Activated CD4-positive, alpha-beta T cell treated with anti-CD3 and anti-CD28 coated beads for 36 hours (primary cell): ENCODE measurements at regions of chr9 and their contacts with region 1.

Region 1: DNA sequence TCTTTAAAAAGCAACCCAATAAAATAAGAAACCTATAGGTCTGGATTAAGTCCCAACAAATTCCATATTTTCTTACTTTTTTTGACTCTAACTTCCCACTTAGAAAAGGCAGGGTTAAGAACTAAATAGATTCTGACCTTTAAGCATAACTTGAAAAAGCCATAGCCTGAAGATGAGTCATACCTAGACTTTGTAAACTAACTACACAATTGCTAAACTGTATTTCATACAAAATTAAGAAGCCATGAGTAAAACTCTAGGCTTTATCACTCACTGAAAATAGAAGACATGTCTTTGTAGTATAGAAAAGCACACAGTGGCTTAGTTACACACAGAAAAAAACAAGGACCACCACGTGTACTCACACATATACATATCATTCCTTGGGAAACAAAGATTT is 51.5 kb downstream of the MLLT3 start:
- DNase-seq: no peak
- ATAC-seq: peak; percentile 89
- H3K4me3 Mint-ChIP-seq: no peak overlapping the region
- H3K27ac Mint-ChIP-seq: no peak overlapping the region
- H3K4me1 Mint-ChIP-seq: peaks cover 72% of the 10 kb centered on the region
- H3K27me3 Mint-ChIP-seq: no peaks in the 10 kb centered on the region

Region 2: DNA sequence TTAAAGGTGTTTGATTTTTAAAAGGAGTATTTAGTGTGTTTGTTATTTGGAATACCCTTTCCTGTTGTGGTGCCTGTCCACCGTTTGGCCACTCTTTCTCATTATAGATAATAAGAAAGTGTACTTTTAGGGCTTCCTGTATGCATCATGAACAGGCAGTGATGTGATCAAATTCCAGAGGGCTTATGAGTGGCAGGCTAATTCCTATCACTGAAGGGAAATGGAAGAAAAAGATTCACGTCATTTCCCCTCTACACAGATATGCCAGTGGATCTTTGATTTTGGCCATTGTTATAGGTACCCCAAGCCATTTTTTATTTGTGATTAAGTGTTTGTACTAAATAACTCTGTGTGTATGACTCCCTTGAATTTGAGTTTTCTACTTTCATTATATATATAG is 1227.8 kb before region 1 on chr9:
- CTCF ChIA-PET with region 1: no interaction called
- POLR2A ChIA-PET with region 1: no interaction called
- intact Hi-C with region 1: no loop called
- DNase-seq: no peak
- ATAC-seq: no peak
- H3K4me3 Mint-ChIP-seq: no peak overlapping the region
- H3K27ac Mint-ChIP-seq: no peak overlapping the region
- H3K4me1 Mint-ChIP-seq: no peaks in the 10 kb centered on the region
- H3K27me3 Mint-ChIP-seq: no peaks in the 10 kb centered on the region

Region 3: GRCh38 chr9:20544953-20545622 is 25.7 kb before region 1 on chr9:
- CTCF ChIA-PET with region 1: no interaction called
- POLR2A ChIA-PET with region 1: no interaction called
- intact Hi-C with region 1: no loop called
- DNase-seq: no peak
- ATAC-seq: no peak
- H3K4me3 Mint-ChIP-seq: no peak overlapping the region
- H3K27ac Mint-ChIP-seq: no peak overlapping the region
- H3K4me1 Mint-ChIP-seq: peaks cover 27% of the 10 kb centered on the region
- H3K27me3 Mint-ChIP-seq: no peaks in the 10 kb centered on the region

Region 4: GRCh38 chr9:20604562-20604961 is 33.8 kb after region 1 on chr9:
- CTCF ChIA-PET with region 1: no interaction called
- POLR2A ChIA-PET with region 1: no interaction called
- intact Hi-C with region 1: loop called in 1 of 2 experiments (anchors 5 kb)
- DNase-seq: no peak
- ATAC-seq: peak; percentile 87
- H3K4me3 Mint-ChIP-seq: peak overlapping the region; percentile 56
- H3K27ac Mint-ChIP-seq: no peak overlapping the region
- H3K4me1 Mint-ChIP-seq: peaks cover 72% of the 10 kb centered on the region
- H3K27me3 Mint-ChIP-seq: no peaks in the 10 kb centered on the region